ENCODE measurements at regions of chr5 and their contacts with region 1.

Region 1: DNA sequence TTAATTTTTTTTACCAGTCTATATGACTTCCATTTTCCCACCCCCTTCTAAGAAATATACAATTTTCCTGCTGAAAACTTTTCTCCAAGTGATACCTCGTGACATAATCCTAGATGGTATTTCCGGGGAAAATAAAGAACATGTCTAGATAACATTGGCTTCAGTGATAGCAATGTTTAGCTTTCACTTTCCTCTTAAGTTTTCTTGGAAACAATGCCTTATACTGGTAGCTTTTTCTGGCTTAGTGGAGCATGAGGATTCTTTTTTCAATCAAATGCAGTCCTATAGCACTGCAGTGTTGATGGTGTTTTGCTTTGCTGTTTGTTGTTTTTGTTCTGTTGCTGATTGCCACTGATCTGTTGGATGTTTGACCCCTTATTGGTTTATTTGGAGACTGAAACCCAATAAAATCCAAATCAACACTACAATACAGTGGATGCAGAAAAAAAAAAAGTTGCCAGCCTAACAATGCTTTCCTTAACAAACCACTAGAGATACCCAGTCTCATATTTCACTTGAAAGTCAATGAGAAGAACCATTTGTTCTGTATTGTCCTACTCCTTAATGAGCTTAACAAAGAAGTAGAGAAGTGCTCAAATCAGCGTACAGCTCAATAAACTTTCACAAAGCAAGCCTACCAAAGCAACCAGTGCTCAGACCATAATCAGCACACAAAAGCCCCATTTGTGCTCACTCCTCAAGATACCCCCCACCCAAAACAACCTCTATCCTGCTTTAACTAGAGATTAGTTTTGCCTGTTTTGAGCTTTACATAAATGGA is 74.2 kb upstream of the GRAMD2B start:
- DNase-seq: no peak
- ATAC-seq: no peak
- H3K4me3 ChIP-seq: no peak overlapping the region
- H3K27ac ChIP-seq: no peak overlapping the region
- H3K4me1 ChIP-seq: peaks cover 3% of the 10 kb centered on the region
- H3K27me3 ChIP-seq: no peaks in the 10 kb centered on the region
- CTCF ChIP-seq: no peak

Region 2: DNA sequence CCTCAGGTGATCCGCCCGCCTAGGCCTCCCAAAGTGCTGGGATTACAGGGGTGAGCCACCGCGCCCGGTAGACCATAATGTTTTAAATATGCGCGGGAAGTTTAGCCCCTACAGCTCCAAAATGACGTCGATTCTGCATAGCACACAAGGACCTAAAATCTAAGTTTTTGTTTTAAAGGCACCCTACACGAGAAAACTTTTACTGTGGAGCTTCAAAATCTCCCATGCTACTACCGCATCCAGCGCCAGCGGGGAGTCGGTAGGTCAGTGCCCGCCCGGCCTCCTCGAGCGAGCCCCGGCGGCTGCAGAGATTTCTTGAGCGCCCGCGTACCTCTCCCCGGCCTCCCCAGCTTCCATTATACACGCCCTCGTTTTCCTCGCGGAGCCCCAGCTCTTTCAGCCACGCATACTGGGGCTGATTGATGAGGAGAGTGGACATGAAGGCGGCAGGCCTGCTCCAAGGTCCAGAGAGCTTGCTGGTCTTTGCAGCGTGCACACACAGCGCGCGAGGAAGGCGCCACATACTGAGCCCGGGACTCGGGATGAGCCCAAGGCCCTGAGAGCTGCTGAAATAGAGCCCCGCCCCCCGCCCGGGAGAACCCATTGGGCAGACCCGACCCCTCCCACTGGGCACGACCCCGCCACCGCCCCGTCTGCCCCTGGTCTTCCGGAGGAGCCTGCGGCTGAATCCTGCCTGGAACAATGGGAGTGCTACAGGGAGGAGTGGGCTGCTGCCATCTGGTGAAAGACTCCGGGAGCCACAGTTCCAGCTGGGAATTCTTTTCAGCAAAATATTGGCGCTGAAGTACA is 245.8 kb after region 1 on chr5 and contains the start of gene ALDH7A1:
- CTCF ChIA-PET with region 1: no interaction called
- POLR2A ChIA-PET with region 1: no interaction called
- in situ Hi-C with region 1: no loop called
- intact Hi-C with region 1: loop called (anchors 5 kb)
- DNase-seq: peak; percentile 77
- ATAC-seq: peak; percentile 98
- H3K4me3 ChIP-seq: peak within 1 kb of the TSS; percentile 61 to 67
- H3K27ac ChIP-seq: peak within 1 kb of the TSS; percentile 81
- H3K4me1 ChIP-seq: peaks cover 14% of the 10 kb centered on the region; the same call in 1 of the 2 replicates
- H3K27me3 ChIP-seq: no peaks in the 10 kb centered on the region
- CTCF ChIP-seq: peak; percentile 84
- total RNA-seq, gene ALDH7A1: 52.9 TPM

Measured in Panc1 (cell line).